ENCODE measurements at regions of chr1 and their contacts with region 1.

Region 1: GRCh38 chr1:157197906-157198435 is 59.8 kb upstream of the ETV3 start:
- DNase-seq: no peak
- CTCF ChIP-seq: no peak

Region 2: GRCh38 chr1:157176591-157177121 is 21.3 kb before region 1 on chr1:
- CTCF ChIA-PET with region 1: interaction called, 25 read pairs
- POLR2A ChIA-PET with region 1: no interaction called
- DNase-seq: peak; percentile 41
- CTCF ChIP-seq: no peak

Region 3: DNA sequence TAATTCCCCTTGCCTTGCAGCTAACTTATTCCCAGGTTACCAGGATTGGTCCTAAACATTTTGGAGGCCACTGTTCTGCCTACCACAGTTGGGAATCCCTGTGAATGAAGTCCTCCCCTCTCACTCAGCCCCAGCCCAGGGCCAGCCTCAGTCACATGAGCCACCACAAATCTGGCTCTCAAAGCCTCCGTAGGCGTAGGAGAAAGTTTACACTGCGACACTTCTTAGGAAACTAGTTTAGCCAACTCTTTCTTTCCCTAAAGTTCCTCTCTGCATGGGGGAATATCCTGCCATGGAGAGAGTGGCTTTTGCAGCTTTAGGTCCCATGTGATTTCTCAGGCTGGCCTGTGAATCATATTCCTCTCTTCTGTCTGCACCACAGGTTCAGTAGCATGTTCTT is 14.1 kb before region 1 on chr1:
- CTCF ChIA-PET with region 1: interaction called, 31 read pairs
- POLR2A ChIA-PET with region 1: no interaction called
- DNase-seq: no peak
- CTCF ChIP-seq: no peak

Region 4: DNA sequence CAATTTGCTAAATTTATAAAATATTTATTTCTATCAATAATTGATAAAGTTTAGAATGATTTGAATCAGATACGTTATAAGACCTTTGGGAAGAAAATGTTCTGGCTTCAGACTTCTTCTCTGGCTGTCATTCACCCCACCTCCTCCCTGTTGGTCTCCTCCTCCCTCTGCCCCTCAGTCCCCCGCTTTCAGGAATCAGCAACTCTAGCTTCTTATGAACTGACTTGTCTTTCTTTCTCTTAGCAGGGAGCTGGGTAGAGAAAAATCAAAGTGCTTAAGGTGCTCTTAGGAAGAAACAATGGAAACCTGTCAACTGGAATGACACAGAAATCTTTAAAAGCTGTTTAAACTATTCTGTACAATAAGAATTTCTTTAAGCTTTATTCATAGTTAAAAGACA is 11.5 kb after region 1 on chr1:
- CTCF ChIA-PET with region 1: interaction called, 10 read pairs
- POLR2A ChIA-PET with region 1: no interaction called
- DNase-seq: no peak
- CTCF ChIP-seq: no peak

Region 5: GRCh38 chr1:157490467-157491165 is 292.6 kb after region 1 on chr1:
- CTCF ChIA-PET with region 1: interaction called, 27 read pairs
- POLR2A ChIA-PET with region 1: no interaction called
- DNase-seq: peak; percentile 54
- CTCF ChIP-seq: peak; percentile 72

Region 6: DNA sequence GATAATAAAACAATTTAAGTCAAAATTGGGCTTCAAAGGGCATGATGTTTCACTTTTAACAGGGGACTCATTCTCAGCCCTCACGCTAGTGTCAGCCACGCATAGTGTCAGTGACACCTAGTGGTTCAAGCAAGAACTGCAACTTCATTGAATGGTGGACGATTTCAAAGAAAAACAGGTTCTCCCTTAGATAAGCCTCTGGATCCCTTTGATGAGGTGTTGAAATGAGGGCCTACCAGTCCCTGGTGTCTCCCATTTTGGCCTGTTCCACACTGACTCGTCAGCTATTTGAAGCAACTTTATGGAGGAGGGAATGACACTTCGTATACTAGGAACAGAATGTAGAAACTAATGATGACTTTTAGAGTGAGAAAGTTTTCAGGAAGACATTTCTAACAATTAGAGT is 298.2 kb after region 1 on chr1:
- CTCF ChIA-PET with region 1: interaction called, 27 read pairs
- POLR2A ChIA-PET with region 1: no interaction called
- DNase-seq: peak; percentile 39
- CTCF ChIP-seq: peak; percentile 81

Region 7: GRCh38 chr1:157505481-157506272 is 307.7 kb after region 1 on chr1:
- CTCF ChIA-PET with region 1: interaction called, 15 read pairs
- POLR2A ChIA-PET with region 1: no interaction called
- DNase-seq: peak; percentile 75
- CTCF ChIP-seq: peak; percentile 84